ENCODE measurements at regions of chr6 and their contacts with region 1.

Region 1: DNA sequence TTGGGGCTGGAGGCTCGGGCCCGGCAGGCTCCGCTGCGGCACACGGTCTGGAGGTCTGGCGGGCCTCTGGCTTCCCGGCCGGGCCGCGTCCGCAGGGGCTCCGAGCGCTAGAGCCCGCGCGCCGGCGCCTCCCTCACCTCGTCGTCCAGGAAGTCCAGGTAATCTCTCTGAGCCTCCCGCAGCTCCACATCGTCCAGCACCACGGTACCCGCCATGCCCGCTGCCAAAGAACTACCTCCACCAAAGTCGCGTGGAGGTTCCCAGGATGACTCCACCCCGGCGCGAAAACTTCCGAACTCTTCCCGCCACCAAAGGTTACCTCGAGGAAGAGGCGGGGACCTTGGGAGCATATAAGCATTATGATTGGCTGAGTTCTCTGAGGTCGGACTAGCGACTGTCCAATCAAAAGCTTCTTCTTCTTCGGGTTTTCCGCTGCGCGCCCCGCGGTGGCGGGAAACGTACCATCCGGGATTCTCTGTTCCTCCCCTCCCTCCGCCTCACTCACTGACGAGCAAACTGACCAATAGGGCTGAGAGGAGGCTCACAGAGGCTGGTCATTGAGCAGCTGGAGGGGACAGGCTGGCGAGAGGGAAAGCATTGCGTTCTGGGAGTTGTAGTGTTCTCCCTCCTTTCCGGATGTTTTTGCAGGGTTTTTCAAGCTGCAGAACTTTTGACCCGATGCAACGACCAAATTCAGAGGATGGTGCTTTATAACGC is at the start of gene MCM3:
- DNase-seq: peak; percentile 98
- H3K4me3 Mint-ChIP-seq: no peak within 1 kb of the TSS
- H3K27ac Mint-ChIP-seq: no peak within 1 kb of the TSS
- H3K4me1 Mint-ChIP-seq: peaks cover 44% of the 10 kb centered on the region
- H3K27me3 Mint-ChIP-seq: no peaks in the 10 kb centered on the region
- total RNA-seq, gene MCM3: 213 TPM in 2 replicates

Region 2: DNA sequence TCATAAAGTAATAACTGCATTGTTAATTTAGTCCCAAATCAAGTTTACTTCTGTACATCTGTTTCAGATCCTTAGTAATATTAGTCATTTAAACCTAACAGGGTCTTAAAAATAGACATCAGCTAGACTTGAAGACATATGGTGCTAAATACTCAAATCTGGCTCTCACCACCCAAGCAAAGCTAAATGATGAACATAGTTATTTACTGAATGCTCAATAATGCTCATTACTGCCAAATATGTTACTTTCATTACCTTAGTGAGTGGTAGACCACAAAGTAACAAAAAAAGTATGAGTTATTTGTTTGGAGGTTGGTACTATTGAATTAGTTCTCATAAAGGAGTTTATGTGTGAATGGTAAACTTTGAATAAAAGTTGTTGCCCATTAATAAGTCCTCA is 699.4 kb before region 1 on chr6:
- intact Hi-C with region 1: no loop called
- DNase-seq: no peak
- H3K4me3 Mint-ChIP-seq: no peak overlapping the region
- H3K27ac Mint-ChIP-seq: no peak overlapping the region
- H3K4me1 Mint-ChIP-seq: no peaks in the 10 kb centered on the region
- H3K27me3 Mint-ChIP-seq: no peaks in the 10 kb centered on the region

Region 3: GRCh38 chr6:52227495-52227894 is 57.1 kb before region 1 on chr6:
- intact Hi-C with region 1: loop called (anchors 1 kb)
- DNase-seq: peak; percentile 71
- H3K4me3 Mint-ChIP-seq: no peak overlapping the region
- H3K27ac Mint-ChIP-seq: no peak overlapping the region
- H3K4me1 Mint-ChIP-seq: peaks cover 37% of the 10 kb centered on the region
- H3K27me3 Mint-ChIP-seq: peaks cover 60% of the 10 kb centered on the region

Region 4: DNA sequence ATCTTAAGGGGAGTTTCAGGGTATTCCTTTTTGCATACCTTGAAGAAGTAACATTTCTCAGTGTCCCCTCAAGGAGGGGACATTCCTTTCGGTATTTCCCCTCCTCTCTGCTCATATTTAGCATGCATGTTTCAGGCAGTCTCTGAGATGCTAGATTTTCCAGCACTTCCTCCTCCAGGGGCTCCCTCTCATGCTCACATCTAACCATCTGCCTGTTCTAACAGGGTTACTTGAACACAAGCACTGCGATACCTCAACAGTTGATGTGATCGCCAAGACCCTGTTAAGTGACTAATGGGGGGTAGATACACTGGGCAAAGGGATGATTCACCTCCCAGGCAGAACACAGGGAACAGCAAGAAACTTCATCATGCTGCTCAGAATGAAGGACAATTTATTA is 12.8 kb after region 1 on chr6:
- intact Hi-C with region 1: loop called (anchors 1 kb)
- DNase-seq: no peak
- H3K4me3 Mint-ChIP-seq: no peak overlapping the region
- H3K27ac Mint-ChIP-seq: no peak overlapping the region
- H3K4me1 Mint-ChIP-seq: peaks cover 23% of the 10 kb centered on the region
- H3K27me3 Mint-ChIP-seq: no peaks in the 10 kb centered on the region

Region 5: DNA sequence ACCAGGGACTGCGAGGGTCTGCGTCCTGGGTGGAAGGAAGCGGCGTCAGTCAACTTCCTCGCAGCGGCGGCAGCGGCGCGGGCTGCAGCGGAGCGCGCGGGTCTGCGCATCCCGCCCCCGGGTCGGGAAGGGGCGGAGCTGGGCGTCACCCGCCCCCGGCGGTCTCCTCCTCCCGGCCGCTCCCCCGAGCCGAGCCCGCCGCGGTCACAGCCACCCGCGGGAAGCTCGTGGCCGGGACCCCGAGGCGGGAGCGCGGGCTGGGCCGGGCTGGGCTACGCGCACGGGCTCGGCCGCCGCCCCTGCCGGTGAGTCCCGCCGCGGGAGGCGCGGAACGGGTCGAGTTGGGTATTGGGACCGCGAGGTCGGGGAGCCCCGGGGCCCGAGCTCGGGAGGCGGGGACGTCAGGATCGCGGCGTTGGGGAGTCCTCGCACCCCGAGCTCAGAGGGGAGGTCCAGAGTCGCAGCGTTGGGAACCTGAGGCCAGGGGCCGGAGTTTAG is 77.4 kb after region 1 on chr6 and contains the start of gene PAQR8:
- intact Hi-C with region 1: loop called (anchors 1 kb)
- DNase-seq: peak; percentile 79
- H3K4me3 Mint-ChIP-seq: peak within 1 kb of the TSS; percentile 99
- H3K27ac Mint-ChIP-seq: peak within 1 kb of the TSS; percentile 89
- H3K4me1 Mint-ChIP-seq: peaks cover 25% of the 10 kb centered on the region
- H3K27me3 Mint-ChIP-seq: no peaks in the 10 kb centered on the region
- total RNA-seq, gene PAQR8: 6.8 and 8.8 TPM in 2 replicates

Region 6: DNA sequence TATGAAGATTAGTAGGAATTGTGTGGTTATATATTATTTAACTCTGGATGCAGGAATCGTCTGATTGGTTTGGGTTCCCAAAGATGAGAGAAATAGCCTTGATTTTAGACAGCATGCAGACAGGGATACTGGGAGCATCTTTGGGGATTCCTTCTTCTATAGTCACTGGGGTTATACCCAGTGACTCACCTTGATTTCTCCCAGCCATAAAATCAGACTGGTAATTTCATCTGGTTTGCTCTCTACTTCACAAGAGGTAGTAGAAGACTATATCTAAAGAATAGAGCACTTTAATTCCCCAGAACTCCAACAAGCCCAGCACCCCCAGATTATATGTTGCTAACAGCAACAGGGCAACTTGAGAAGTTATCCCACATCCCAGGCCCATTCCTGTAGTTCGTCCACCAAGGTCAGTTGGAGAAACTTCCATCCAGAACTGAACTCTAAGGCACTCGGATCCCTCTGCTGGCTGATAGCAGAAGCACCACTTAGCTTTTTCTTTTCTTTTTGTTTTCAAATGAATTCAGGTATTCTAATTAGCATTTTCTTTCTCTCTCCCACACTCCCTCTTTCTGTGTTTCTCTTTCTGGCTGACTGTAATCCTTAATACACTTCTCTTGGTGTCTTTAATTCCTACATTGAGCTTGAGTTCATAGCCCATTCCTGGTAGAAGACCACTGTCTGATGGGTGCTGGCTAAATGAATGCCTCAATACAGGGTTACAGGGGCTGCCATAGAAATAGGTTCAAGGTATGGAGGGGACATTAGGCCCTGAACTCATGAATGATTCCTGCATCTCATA is 115.1 kb after region 1 on chr6:
- intact Hi-C with region 1: loop called (anchors 1 kb)
- DNase-seq: no peak
- H3K4me3 Mint-ChIP-seq: no peak overlapping the region
- H3K27ac Mint-ChIP-seq: peak overlapping the region; percentile 44
- H3K4me1 Mint-ChIP-seq: peaks cover 47% of the 10 kb centered on the region
- H3K27me3 Mint-ChIP-seq: no peaks in the 10 kb centered on the region

Region 7: DNA sequence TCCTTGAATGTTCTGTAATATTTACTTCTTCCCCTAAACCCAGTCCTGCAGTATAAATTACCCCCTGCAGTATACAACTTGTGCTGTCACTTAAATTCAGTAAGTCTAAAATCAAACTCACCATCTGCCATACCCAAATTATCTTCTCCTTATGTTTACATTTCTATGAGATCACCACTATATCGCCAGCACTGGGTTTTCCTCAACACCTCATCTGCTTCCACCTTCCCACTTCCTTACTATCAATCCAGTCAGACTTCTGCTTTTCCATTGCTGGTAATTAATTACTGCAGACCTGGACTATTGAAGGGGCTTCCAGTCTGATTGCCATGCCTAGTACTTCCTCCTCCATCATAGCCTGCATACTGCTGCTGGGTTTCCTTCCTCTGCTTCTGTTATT is 150.7 kb after region 1 on chr6:
- intact Hi-C with region 1: no loop called
- DNase-seq: no peak
- H3K4me3 Mint-ChIP-seq: no peak overlapping the region
- H3K27ac Mint-ChIP-seq: no peak overlapping the region
- H3K4me1 Mint-ChIP-seq: peaks cover 4% of the 10 kb centered on the region
- H3K27me3 Mint-ChIP-seq: peaks cover 13% of the 10 kb centered on the region

Region 8: DNA sequence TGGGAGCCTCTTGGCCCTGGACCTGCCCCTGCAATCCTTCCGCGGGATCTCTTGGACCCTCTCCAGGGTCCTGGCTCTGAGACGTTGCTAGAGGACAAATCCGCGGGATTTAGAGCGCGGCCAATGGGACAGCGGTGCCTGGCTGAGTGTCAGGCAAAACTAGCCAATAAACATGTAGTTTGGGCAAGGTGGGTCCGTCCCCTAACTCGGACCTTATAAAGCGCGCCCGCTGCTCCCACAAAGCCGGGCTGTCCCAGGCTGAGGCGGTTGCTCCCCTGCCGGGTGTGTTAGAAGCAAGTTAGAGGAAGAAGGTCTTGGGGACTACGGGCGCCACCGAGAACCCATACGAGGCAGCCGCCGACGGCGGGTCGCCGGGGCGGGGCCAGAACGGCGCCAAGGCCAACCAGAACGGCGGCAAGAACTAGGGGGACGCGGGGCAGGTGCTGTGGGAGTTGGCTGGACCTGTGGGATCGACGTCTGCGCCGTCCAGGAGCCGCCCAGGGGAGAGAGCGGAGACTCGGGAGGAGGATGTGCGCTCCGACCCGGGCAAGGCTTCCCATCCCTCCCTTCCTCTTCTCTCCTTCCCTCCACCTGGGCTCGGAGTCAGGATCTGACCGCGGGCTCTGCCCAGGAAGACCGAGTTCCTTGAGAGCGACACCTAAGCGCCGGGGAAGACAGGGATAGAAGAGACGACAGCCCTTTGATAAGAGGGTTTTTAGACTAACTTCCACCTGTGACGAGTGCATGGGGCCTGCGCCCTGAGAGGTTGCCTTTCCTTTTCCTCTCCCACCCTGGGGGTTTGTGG is 379.8 kb after region 1 on chr6:
- intact Hi-C with region 1: loop called (anchors 1 kb)
- DNase-seq: peak; percentile 78
- H3K4me3 Mint-ChIP-seq: no peak overlapping the region
- H3K27ac Mint-ChIP-seq: no peak overlapping the region
- H3K4me1 Mint-ChIP-seq: peaks cover 16% of the 10 kb centered on the region
- H3K27me3 Mint-ChIP-seq: no peaks in the 10 kb centered on the region

Measured in activated T-helper 2 cell treated with anti-CD3 and anti-CD28 coated beads, Interferon-gamma antibody, Interleukin-2, Interleukin-4, amounts not matched to agents 10 μg/mL and 5 μg/mL and 100 μg/mL, durations not matched to agents 14 hours and 24 hours and 36 hours (primary cell).